OCI-LY7 (cell line): ENCODE measurements at regions of chr5 and their contacts with region 1.

Region 1: GRCh38 chr5:57173185-57174127 is at the start of gene GPBP1:
- DNase-seq: peak; percentile 96
- H3K4me3 ChIP-seq: peak within 1 kb of the TSS; percentile 93
- H3K27ac ChIP-seq: peak within 1 kb of the TSS; percentile 93
- H3K4me1 ChIP-seq: peaks cover 11% of the 10 kb centered on the region
- CTCF ChIP-seq: peak; percentile 3; the same call in 1 of the 2 replicates
- total RNA-seq, gene GPBP1: 77.0 and 96.6 TPM in 2 replicates

Region 2: DNA sequence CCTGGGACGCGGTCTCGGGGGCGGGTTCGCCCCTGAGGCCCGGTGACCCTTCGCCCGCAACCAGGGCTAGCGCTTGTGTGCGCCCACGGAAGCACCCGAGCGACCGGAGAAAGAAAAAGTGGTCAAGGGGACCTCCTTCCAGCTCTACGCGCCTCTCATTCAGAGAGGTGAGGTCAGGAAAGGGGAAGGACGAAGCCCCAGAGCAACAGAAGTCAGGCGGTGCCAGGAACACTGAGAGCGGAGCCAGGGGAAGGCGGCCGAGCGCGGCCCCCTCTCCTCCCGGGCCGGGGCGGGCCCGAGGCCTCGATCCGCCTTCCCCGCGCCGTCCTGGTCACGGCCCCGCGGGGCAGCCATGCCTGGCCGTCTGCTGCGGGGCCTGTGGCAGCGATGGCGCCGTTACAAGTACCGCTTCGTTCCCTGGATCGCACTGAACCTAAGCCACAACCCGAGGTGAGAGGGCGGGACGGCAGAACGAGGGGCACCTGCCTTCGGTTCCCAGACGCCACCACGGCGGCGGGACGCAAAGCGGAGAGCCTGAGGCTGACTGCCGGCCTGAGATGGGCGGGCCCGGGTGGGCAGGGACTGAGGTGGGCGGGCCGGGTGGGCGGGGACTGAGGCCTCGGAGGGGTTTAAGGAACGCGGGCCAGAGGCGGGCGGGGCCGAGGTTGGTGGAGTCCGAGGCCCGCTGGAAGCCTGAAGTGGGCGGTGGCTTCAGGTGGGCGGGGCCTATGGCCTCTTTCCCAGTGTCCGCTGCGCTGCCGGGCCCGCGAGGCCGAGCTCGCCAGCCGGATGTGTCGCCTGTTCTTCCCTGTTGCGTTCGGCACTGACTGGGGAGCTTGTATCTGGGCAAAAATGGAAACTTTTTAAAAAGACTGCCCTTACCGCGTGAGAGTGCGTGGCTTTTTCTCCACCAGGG is 263.9 kb before region 1 on chr5 and contains the start of gene SETD9:
- CTCF ChIA-PET with region 1: no interaction called
- POLR2A ChIA-PET with region 1: interaction called, 5 read pairs
- intact Hi-C with region 1: loop called (anchors 1 kb)
- DNase-seq: peak; percentile 98
- H3K4me3 ChIP-seq: peak within 1 kb of the TSS; percentile 76
- H3K27ac ChIP-seq: peak within 1 kb of the TSS; percentile 77
- H3K4me1 ChIP-seq: peaks cover 21% of the 10 kb centered on the region
- CTCF ChIP-seq: no peak
- total RNA-seq, gene SETD9: 5.0 and 6.7 TPM in 2 replicates

Region 3: GRCh38 chr5:56951946-56952691 is 221.3 kb before region 1 on chr5 and contains the start of gene MIER3:
- CTCF ChIA-PET with region 1: no interaction called
- POLR2A ChIA-PET with region 1: interaction called, 3 read pairs
- intact Hi-C with region 1: loop called (anchors 2 kb)
- DNase-seq: peak; percentile 85
- H3K4me3 ChIP-seq: peak within 1 kb of the TSS; percentile 96
- H3K27ac ChIP-seq: peak within 1 kb of the TSS; percentile 42
- H3K4me1 ChIP-seq: peaks cover 16% of the 10 kb centered on the region
- CTCF ChIP-seq: no peak
- total RNA-seq, gene MIER3: 12.6 and 51.9 TPM in 2 replicates

Region 4: GRCh38 chr5:57117596-57117995 is 55.9 kb before region 1 on chr5:
- CTCF ChIA-PET with region 1: no interaction called
- POLR2A ChIA-PET with region 1: no interaction called
- intact Hi-C with region 1: no loop called
- DNase-seq: no peak
- H3K4me3 ChIP-seq: no peak overlapping the region
- H3K27ac ChIP-seq: no peak overlapping the region
- H3K4me1 ChIP-seq: no peaks in the 10 kb centered on the region
- CTCF ChIP-seq: no peak

Region 5: DNA sequence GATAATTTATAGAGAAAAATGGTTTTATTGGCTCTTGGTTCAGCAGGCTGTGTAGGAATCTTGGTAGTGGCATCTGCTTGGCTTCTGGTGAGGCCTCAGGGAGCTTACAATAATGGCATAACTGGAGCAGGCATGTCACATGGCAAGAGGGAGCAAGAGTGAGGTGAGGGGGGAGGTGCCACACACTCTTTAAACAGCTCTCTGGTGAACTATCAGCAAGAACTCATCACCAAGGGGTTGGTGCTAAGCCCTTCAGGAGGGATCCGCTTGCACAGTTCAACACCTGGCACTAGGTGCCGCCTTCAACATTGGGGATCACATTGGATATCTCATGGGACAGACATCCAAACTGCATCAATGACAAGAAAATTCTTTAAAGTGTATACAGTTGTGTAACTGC is 10.9 kb after region 1 on chr5:
- CTCF ChIA-PET with region 1: interaction called, 5 read pairs
- POLR2A ChIA-PET with region 1: interaction called, 5 read pairs
- intact Hi-C with region 1: loop called (anchors 1 kb)
- DNase-seq: peak; percentile 54
- H3K4me3 ChIP-seq: peak overlapping the region; percentile 59
- H3K27ac ChIP-seq: no peak overlapping the region
- H3K4me1 ChIP-seq: peaks cover 74% of the 10 kb centered on the region
- CTCF ChIP-seq: peak; percentile 75

Region 6: GRCh38 chr5:57189515-57189914 is 16.1 kb after region 1 on chr5:
- CTCF ChIA-PET with region 1: interaction called, 5 read pairs
- POLR2A ChIA-PET with region 1: interaction called, 30 read pairs
- intact Hi-C with region 1: loop called (anchors 1 kb)
- DNase-seq: no peak
- H3K4me3 ChIP-seq: no peak overlapping the region
- H3K27ac ChIP-seq: no peak overlapping the region
- H3K4me1 ChIP-seq: peaks cover 57% of the 10 kb centered on the region
- CTCF ChIP-seq: no peak

Region 7: GRCh38 chr5:57221049-57221568 is 47.7 kb after region 1 on chr5:
- CTCF ChIA-PET with region 1: interaction called, 3 read pairs
- POLR2A ChIA-PET with region 1: interaction called, 5 read pairs
- intact Hi-C with region 1: loop called (anchors 2 kb)
- DNase-seq: peak; percentile 68
- H3K4me3 ChIP-seq: no peak overlapping the region
- H3K27ac ChIP-seq: no peak overlapping the region
- H3K4me1 ChIP-seq: no peaks in the 10 kb centered on the region
- CTCF ChIP-seq: peak; percentile 98